SK-N-SH (cell line): ENCODE measurements at regions of chr14 and their contacts with region 1.

Region 1: DNA sequence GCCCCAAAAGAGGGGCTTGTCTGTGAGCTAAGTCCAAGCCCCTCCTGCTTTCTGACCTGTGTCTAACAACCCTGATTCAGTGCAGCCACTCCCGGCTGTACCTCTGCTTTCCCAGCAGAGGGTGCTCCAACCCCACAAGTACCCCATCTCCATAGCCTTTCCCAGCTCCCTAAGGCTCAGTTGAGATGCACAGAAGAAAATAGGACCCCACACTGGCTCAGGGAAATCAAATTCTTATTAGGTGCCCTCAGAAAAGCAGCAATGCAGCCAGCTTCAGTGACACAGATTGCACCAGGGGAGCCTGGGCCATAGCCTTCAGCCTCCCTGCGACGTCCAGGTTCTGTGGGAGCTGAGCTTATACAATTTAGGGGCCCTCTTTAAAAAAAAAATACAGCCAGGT is 49.9 kb downstream of the LRRC74A start:
- DNase-seq: peak; percentile 86
- H3K4me3 ChIP-seq: no peak overlapping the region; a peak in 1 of 4 replicates
- H3K27ac ChIP-seq: no peak overlapping the region
- H3K4me1 ChIP-seq: no peaks in the 10 kb centered on the region
- H3K27me3 ChIP-seq: 0 out of 2 replicates have a peak, but pooled peaks cover 4% of the 10 kb centered on the region
- CTCF ChIP-seq: peak; percentile 97
- EP300 ChIP-seq: no peak
- RAD21 ChIP-seq: peak; percentile 100

Region 2: GRCh38 chr14:76584271-76584702 is 291.8 kb before region 1 on chr14:
- CTCF ChIA-PET with region 1: no interaction called
- POLR2A ChIA-PET with region 1: no interaction called
- DNase-seq: no peak
- H3K4me3 ChIP-seq: no peak overlapping the region
- H3K27ac ChIP-seq: no peak overlapping the region
- H3K4me1 ChIP-seq: no peaks in the 10 kb centered on the region; a peak in 1 of 4 replicates
- H3K27me3 ChIP-seq: 0 out of 2 replicates have a peak, but pooled peaks cover 4% of the 10 kb centered on the region
- CTCF ChIP-seq: no peak
- EP300 ChIP-seq: no peak
- RAD21 ChIP-seq: no peak

Region 3: DNA sequence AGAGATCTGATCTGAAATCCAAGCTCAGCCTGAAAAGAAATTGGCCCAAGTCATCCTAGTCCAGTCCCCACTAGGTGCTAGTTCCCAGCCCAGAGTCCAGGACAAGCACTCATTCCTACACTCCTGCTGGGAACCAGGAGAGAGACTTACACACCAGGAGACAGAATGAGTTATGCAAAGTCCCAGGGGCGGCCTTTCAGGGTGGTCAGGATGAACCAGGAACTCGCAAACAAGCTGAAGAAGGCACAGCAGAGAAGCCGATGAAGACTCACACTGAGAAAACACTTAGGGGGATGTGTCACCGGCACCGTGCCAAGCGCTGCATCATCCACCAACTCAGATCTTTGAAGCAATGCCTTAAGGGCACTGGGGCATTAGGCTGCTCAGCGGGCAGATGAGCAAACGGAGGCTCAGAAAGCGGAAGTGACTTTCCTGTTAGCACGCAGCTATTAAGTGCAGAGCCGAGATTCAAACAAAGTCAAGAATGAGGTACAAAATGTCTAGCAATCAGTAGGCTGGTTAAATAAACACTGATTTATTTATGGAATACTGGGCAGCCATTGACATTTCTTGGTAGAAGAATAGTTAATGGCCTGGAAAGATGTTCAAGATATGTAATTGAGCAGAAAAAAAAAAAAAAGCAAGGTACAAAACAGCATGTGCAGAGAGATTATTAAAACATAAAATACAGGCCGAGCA is 28.8 kb after region 1 on chr14:
- CTCF ChIA-PET with region 1: interaction called, 102 read pairs
- POLR2A ChIA-PET with region 1: interaction called, 3 read pairs
- DNase-seq: peak; percentile 78
- H3K4me3 ChIP-seq: peak overlapping the region in 1 of 2 experiments; percentile 34; a peak in 2 of 4 replicates
- H3K27ac ChIP-seq: peak overlapping the region; percentile 55 to 85
- H3K4me1 ChIP-seq: peaks cover 19 to 24% of the 10 kb centered on the region in 2 experiments; a peak in 2 of 4 replicates
- H3K27me3 ChIP-seq: no peaks in the 10 kb centered on the region
- CTCF ChIP-seq: no peak
- EP300 ChIP-seq: peak; percentile 31 to 46; a peak in 2 of 4 replicates
- RAD21 ChIP-seq: no peak

Region 4: GRCh38 chr14:76937181-76938091 is 61.4 kb after region 1 on chr14:
- CTCF ChIA-PET with region 1: interaction called, 11 read pairs
- POLR2A ChIA-PET with region 1: no interaction called
- DNase-seq: peak; percentile 93
- H3K4me3 ChIP-seq: no peak overlapping the region
- H3K27ac ChIP-seq: peak overlapping the region; percentile 89 to 97
- H3K4me1 ChIP-seq: peaks cover 23 to 50% of the 10 kb centered on the region in 2 experiments
- H3K27me3 ChIP-seq: no peaks in the 10 kb centered on the region
- CTCF ChIP-seq: no peak
- EP300 ChIP-seq: no peak; a peak in 1 of 4 replicates
- RAD21 ChIP-seq: peak; percentile 35

Region 5: DNA sequence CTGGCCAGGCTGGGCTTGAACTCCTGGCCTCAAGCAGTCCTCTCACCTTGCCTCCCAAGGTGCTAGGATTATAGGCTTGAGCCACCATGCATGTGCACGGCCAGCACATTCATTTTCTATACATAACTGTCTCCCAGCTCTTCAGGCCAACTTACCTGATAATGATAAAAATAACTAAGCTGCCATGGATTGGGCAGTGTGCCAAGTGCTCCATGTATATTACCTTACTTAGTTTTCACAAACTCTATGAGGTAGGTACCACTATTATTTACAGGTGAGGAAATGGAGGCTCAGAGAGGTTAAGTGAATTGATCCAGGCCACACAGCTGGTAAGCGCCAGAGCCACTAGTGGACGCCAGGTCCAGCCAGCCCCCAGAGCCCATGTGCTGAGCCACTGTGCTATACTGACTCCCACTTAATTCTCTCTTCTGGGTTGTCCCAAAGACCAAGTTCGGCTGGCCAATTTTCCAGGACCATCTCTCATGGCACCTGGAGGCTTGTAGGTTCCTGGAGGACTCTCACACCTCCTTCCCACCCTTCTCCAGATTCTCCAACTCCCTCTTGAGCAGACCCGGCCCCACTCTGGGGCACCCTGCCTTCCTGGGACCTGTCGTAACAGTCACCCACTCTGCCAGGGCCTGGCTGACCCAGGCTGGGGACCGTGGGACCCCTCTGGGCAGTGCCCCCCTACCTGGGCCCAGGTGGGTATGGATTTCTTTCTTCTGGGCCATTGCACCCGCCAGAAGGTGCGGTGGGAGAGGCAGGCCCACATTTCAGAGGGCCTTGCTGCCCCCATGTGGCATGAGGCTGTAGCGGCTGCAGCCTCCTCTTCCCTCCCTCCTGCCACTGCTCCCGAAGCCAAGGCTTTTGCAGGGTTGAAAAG is 191.8 kb after region 1 on chr14:
- CTCF ChIA-PET with region 1: interaction called, 764 read pairs
- POLR2A ChIA-PET with region 1: interaction called, 3 read pairs
- DNase-seq: peak; percentile 84
- H3K4me3 ChIP-seq: no peak overlapping the region; a peak in 1 of 4 replicates
- H3K27ac ChIP-seq: no peak overlapping the region
- H3K4me1 ChIP-seq: peaks cover 0 to 14% of the 10 kb centered on the region in 2 experiments; a peak in 2 of 4 replicates
- H3K27me3 ChIP-seq: no peaks in the 10 kb centered on the region
- CTCF ChIP-seq: peak; percentile 92
- EP300 ChIP-seq: no peak
- RAD21 ChIP-seq: peak; percentile 95

Region 6: GRCh38 chr14:77111043-77111442 is 235.0 kb after region 1 on chr14:
- CTCF ChIA-PET with region 1: interaction called, 11 read pairs
- POLR2A ChIA-PET with region 1: no interaction called
- DNase-seq: no peak
- H3K4me3 ChIP-seq: no peak overlapping the region
- H3K27ac ChIP-seq: no peak overlapping the region
- H3K4me1 ChIP-seq: no peaks in the 10 kb centered on the region; a peak in 1 of 4 replicates
- H3K27me3 ChIP-seq: no peaks in the 10 kb centered on the region
- CTCF ChIP-seq: no peak
- EP300 ChIP-seq: no peak
- RAD21 ChIP-seq: no peak

Region 7: GRCh38 chr14:77151918-77152588 is 276.0 kb after region 1 on chr14:
- CTCF ChIA-PET with region 1: interaction called, 57 read pairs
- POLR2A ChIA-PET with region 1: no interaction called
- DNase-seq: peak; percentile 61
- H3K4me3 ChIP-seq: no peak overlapping the region
- H3K27ac ChIP-seq: no peak overlapping the region
- H3K4me1 ChIP-seq: peaks cover 0 to 6% of the 10 kb centered on the region in 2 experiments; a peak in 1 of 4 replicates
- H3K27me3 ChIP-seq: no peaks in the 10 kb centered on the region
- CTCF ChIP-seq: peak; percentile 54
- EP300 ChIP-seq: no peak
- RAD21 ChIP-seq: peak; percentile 75

Region 8: DNA sequence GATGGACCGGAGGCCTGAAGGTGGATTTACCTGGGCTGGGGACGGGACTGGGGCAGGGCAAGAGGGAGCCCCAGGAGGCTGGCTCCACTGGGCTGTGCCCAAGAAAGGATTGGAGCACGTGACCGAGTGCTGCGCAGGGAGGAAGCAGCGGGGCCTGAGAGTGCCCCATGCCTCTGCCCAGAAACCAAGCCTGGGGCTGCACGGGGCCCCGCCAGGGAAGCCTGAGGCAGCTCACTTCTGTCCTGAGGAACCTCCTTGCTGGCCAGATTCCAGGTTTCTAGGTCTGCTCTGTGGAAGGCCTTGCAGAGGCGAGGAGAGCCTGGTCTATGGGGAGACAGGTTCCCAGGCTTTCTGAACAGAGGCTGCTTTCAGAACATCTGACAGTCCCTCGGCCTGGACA is 384.6 kb after region 1 on chr14:
- CTCF ChIA-PET with region 1: no interaction called
- POLR2A ChIA-PET with region 1: no interaction called
- DNase-seq: no peak
- H3K4me3 ChIP-seq: no peak overlapping the region
- H3K27ac ChIP-seq: no peak overlapping the region
- H3K4me1 ChIP-seq: no peaks in the 10 kb centered on the region; a peak in 1 of 4 replicates
- H3K27me3 ChIP-seq: peaks cover 8% of the 10 kb centered on the region; the same call in 1 of the 2 replicates
- CTCF ChIP-seq: no peak
- EP300 ChIP-seq: no peak
- RAD21 ChIP-seq: no peak